B cell (primary cell): ENCODE measurements at regions of chr1 and their contacts with region 1.

Region 1: DNA sequence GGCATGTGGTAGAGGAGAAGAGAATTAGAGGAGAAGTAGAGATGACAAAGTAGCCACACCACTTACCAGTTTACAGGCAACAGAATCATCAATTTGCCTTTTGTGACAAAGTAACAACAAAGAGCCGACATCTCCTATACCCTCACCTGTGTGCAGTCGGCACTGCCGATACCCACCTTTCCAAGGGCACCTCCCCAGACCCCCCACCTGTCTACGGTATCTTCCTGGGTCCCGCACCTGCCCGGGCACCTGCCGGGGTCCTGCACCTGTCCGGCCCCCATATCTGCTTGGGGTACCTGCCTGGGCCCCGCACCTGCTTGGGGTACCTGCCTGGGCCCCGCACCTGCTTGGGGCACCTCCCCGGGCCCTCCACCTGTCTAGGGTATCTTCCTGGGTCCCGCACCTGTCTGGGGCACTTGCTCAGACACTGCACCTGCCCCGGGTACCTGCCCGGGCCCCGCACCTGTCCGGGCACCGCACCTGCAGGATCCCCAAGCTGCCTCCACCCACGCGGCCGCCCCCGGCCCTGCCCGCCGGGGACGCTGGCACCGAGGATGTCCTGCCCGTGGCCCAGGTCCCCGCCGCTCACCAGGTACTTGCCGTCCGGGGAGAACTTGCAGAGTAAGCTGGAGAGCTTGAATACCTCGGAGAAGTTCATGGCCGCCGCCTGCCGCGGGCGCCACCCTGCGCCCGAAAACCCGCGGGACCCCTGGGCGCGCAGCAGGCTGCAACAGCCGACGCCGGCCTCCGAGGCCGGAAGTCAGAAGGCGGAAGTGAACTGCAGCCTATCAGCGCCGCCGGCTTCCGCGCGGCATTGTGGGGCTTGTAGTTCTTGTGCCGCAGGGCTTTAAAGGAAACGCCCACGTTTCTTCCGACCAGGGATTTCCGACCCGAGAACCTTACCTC is at the start of gene WRAP73:
- DNase-seq: peak; percentile 94
- ATAC-seq: peak; percentile 93
- H3K4me3 ChIP-seq: peak within 1 kb of the TSS; percentile 25 to 90 (median 79)
- H3K4me3 Mint-ChIP-seq: peak within 1 kb of the TSS; percentile 91
- H3K27ac ChIP-seq: peak within 1 kb of the TSS in 1 of 2 donors; percentile 69
- H3K27ac Mint-ChIP-seq: peak within 1 kb of the TSS; percentile 73
- H3K4me1 ChIP-seq: peaks cover 37 to 43% of the 10 kb centered on the region in 2 donors
- H3K4me1 Mint-ChIP-seq: peaks cover 30% of the 10 kb centered on the region
- H3K27me3 ChIP-seq: peaks cover 0 to 38% (median 23%) of the 10 kb centered on the region in 4 experiments
- H3K27me3 Mint-ChIP-seq: peaks cover 21% of the 10 kb centered on the region
- CTCF ChIP-seq: peak; percentile 42
- total RNA-seq, gene WRAP73: 37.1 and 37.5 TPM in 2 replicates

Region 2: GRCh38 chr1:3530926-3531818 is 118.4 kb before region 1 on chr1:
- CTCF ChIA-PET with region 1: no interaction called
- POLR2A ChIA-PET with region 1: no interaction called
- intact Hi-C with region 1: loop called (anchors 1 kb)
- DNase-seq: peak; percentile 84
- ATAC-seq: peak; percentile 81
- H3K4me3 ChIP-seq: peak overlapping the region; percentile 45 to 74 (median 61)
- H3K4me3 Mint-ChIP-seq: peak overlapping the region; percentile 86
- H3K27ac ChIP-seq: peak overlapping the region; percentile 52 to 71
- H3K27ac Mint-ChIP-seq: peak overlapping the region; percentile 85
- H3K4me1 ChIP-seq: peaks cover 9 to 14% of the 10 kb centered on the region in 2 donors
- H3K4me1 Mint-ChIP-seq: peaks cover 17% of the 10 kb centered on the region
- H3K27me3 ChIP-seq: no peaks in the 10 kb centered on the region
- H3K27me3 Mint-ChIP-seq: no peaks in the 10 kb centered on the region
- CTCF ChIP-seq: no peak

Region 3: DNA sequence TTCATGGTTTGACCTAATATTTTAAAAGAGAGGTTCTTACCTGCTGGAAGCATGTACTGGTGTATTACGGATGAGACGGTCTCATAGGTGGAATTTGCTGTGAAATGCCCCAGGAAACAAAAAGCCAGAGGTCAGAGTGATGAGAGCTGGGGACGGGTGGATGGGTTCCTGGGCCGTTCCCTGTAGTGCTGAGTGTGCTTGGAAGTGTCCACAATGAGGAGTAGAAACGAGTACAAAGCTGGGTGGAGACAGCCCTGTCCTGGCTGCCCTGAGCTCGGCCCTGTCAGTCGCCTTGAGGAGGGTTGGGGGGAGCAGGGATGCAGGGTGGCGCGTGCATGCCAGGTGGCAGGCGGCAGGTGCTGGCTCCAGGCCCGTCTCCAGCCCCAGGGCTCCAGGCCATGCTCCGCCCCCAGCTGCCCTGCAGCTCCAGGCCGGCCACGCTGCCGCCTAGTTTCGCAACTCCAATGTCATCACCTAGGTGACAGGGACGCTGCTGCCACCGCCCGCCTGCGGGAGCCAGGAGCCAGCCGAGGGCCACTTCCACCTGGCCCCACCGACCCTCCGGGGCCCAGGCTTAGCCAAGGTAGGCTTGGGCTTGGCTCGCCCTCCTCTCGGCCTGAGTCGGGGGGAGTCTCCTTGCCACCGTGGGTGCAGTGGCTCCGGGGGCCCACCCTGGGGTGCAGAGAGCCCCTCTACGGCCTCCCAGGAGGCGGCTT is 19.1 kb after region 1 on chr1:
- CTCF ChIA-PET with region 1: interaction called, 16 read pairs
- POLR2A ChIA-PET with region 1: interaction called, 11 read pairs
- intact Hi-C with region 1: loop called (anchors 2 kb)
- DNase-seq: no peak
- ATAC-seq: no peak
- H3K4me3 ChIP-seq: no peak overlapping the region
- H3K4me3 Mint-ChIP-seq: no peak overlapping the region
- H3K27ac ChIP-seq: no peak overlapping the region
- H3K27ac Mint-ChIP-seq: peak overlapping the region; percentile 18
- H3K4me1 ChIP-seq: peaks cover 59 to 68% of the 10 kb centered on the region in 2 donors
- H3K4me1 Mint-ChIP-seq: peaks cover 64% of the 10 kb centered on the region
- H3K27me3 ChIP-seq: peaks cover 0 to 10% (median 0%) of the 10 kb centered on the region in 4 experiments
- H3K27me3 Mint-ChIP-seq: no peaks in the 10 kb centered on the region
- CTCF ChIP-seq: no peak

Region 4: DNA sequence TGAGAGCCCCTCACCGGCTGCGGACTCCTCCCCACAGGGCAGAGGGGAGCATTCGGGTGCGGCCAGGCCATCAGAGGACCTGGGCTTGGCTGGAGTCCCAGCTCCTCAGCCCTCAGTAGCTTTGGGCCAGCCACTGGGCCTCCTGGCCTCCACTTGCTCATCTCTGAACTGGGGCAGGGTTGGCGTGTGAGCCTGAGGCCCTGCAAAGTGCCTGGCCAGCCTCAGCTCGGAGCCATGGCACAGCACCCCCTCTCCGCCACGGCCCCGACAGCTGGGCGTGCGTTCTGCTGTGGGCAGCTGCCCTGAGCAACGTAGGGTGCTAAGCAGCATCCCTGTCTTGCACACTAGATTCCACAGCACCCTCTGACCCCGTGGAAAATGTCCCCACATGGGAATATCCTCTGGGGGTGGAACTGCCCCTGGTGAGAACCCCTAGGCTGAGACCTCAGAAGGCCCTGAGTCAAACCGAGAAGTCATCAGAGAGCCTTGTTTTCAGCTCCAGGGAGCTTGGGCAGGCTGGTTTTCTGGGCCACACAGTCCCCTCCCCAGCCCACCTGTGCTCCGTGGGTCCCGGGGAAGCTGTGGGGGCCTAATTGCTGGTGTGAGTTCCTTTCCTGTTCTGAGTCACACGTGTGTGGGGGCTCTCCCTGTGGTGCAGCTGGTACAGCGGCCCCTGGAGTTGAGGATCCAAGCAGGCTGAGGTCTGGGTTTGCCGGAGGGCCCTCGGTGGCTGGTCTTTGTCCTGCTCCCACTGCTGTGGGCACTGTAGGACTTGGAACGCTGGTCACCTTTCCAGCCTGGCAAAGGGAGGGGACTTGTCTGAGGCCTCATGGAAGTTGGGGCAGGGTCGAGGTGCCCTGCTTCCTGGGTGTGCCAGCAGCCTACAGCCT is 27.2 kb after region 1 on chr1:
- CTCF ChIA-PET with region 1: interaction called, 9 read pairs
- POLR2A ChIA-PET with region 1: interaction called, 3 read pairs
- intact Hi-C with region 1: loop called (anchors 2 kb)
- DNase-seq: peak; percentile 66
- ATAC-seq: peak; percentile 29
- H3K4me3 ChIP-seq: peak overlapping the region in 3 of 5 experiments; percentile 8 to 43 (median 9)
- H3K4me3 Mint-ChIP-seq: peak overlapping the region; percentile 44
- H3K27ac ChIP-seq: peak overlapping the region; percentile 60 to 77
- H3K27ac Mint-ChIP-seq: peak overlapping the region; percentile 79
- H3K4me1 ChIP-seq: peaks cover 52 to 86% of the 10 kb centered on the region in 2 donors
- H3K4me1 Mint-ChIP-seq: peaks cover 75% of the 10 kb centered on the region
- H3K27me3 ChIP-seq: peaks cover 0 to 3% (median 0%) of the 10 kb centered on the region in 4 experiments
- H3K27me3 Mint-ChIP-seq: no peaks in the 10 kb centered on the region
- CTCF ChIP-seq: no peak

Region 5: GRCh38 chr1:3900119-3900968 is 250.7 kb after region 1 on chr1 and contains the start of gene C1orf174:
- CTCF ChIA-PET with region 1: no interaction called
- POLR2A ChIA-PET with region 1: no interaction called
- intact Hi-C with region 1: loop called (anchors 10 kb)
- DNase-seq: peak; percentile 99
- ATAC-seq: peak; percentile 76
- H3K4me3 ChIP-seq: peak within 1 kb of the TSS; percentile 59 to 98 (median 84)
- H3K4me3 Mint-ChIP-seq: peak within 1 kb of the TSS; percentile 93
- H3K27ac ChIP-seq: peak within 1 kb of the TSS; percentile 84 to 95
- H3K27ac Mint-ChIP-seq: peak within 1 kb of the TSS; percentile 96
- H3K4me1 ChIP-seq: peaks cover 10 to 25% of the 10 kb centered on the region in 2 donors
- H3K4me1 Mint-ChIP-seq: peaks cover 28% of the 10 kb centered on the region
- H3K27me3 ChIP-seq: no peaks in the 10 kb centered on the region
- H3K27me3 Mint-ChIP-seq: no peaks in the 10 kb centered on the region
- CTCF ChIP-seq: no peak
- total RNA-seq, gene C1orf174: 33.2 and 35.7 TPM in 2 replicates